ENCODE measurements at regions of chr4 and their contacts with region 1.

Region 1: GRCh38 chr4:146342600-146343192 is 128.4 kb downstream of the REELD1 start:
- DNase-seq: peak in 1 of 5 donors; percentile 14
- H3K4me3 ChIP-seq: no peak overlapping the region
- H3K27ac ChIP-seq: no peak overlapping the region
- H3K4me1 ChIP-seq: no peaks in the 10 kb centered on the region
- H3K27me3 ChIP-seq: no peaks in the 10 kb centered on the region
- CTCF ChIP-seq: peak in 1 of 3 donors; percentile 15
- EP300 ChIP-seq: no peak
- POLR2A ChIP-seq: no peak

Region 2: DNA sequence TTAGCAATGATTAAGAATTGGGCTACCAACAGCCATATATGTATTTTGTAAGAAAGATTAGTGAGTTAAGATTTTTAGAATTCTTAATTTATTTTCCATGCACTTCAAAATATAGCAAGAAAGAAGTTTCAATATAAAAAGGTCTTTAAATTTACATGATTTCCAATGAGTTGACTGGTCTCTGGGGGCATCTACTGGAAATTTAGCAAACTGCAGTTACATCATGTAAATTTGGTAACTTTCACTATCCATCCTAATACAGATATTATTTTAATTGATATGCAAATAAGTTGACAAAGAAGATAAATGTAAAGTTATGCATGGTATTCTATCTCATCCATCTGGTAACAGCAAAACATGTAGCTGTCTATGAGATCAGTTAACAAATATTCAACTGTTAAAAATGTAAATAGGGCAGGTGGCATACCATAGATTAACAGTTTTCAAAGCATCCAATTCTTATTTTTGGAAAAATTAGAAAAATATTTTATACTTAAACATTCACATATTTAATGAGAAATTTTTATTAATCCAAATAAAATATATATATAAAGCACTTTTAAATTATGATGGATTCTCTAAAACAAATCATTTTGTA is 573.9 kb after region 1 on chr4:
- intact Hi-C with region 1: loop called in 1 of 4 experiments (anchors 10 kb)
- DNase-seq: no peak
- H3K4me3 ChIP-seq: no peak overlapping the region
- H3K27ac ChIP-seq: no peak overlapping the region
- H3K4me1 ChIP-seq: no peaks in the 10 kb centered on the region
- H3K27me3 ChIP-seq: no peaks in the 10 kb centered on the region
- CTCF ChIP-seq: peak in 2 of 3 donors; percentile 34 to 35
- EP300 ChIP-seq: no peak
- POLR2A ChIP-seq: no peak